SK-N-SH (cell line): ENCODE measurements at regions of chr3 and their contacts with region 1.

Region 1: DNA sequence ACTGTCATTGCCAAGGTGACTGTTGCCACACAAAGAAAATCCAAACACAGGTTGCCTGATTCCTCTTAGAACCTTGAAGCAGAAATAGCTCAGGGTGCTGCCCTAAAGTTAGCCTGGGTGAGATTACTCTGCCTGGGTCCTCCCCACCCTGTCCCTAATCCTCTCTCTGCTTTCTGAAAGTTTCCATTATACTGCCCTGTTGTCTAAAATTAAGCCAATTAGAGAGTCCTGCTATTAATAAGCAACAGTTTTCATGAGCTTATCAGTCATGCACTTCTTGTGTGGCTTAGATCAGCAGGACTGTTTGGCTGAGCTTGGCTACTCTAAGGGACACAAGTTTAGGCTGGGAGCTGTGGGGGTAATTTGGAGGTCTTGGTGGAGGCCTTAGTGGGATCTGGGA is 334.7 kb upstream of the LRRFIP2 start:
- DNase-seq: no peak
- H3K4me3 ChIP-seq: no peak overlapping the region
- H3K27ac ChIP-seq: peak overlapping the region in 1 of 2 experiments; percentile 47; a peak in 1 of 4 replicates
- H3K4me1 ChIP-seq: peaks cover 0 to 16% of the 10 kb centered on the region in 2 experiments; a peak in 2 of 4 replicates
- H3K27me3 ChIP-seq: no peaks in the 10 kb centered on the region; the same call in 1 of the 2 replicates
- CTCF ChIP-seq: no peak
- EP300 ChIP-seq: peak in 1 of 2 experiments; percentile 72; a peak in 1 of 4 replicates
- RAD21 ChIP-seq: no peak; the same call in 1 of the 2 replicates

Region 2: DNA sequence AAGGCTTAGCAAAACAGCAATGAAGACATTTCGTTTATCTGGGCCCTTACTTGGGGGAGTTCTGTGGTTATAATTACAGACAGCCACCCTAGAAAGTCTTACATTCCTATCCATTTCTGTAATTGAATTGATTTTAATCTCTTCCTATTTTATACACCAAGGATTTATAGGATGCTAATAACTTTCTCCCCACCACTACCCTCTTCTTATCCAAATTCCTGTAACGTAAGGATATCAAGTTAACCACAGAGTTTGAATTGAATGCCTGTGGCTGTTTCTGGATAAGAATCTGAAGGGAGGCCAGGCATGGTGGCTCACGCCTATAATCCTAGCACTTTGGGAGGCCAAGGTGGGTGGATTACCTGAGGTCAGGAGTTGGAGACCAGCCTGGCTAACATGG is 437.1 kb before region 1 on chr3:
- CTCF ChIA-PET with region 1: no interaction called
- POLR2A ChIA-PET with region 1: no interaction called
- DNase-seq: no peak
- H3K4me3 ChIP-seq: no peak overlapping the region
- H3K27ac ChIP-seq: peak overlapping the region in 1 of 2 experiments; percentile 77; a peak in 2 of 4 replicates
- H3K4me1 ChIP-seq: peaks cover 0 to 27% of the 10 kb centered on the region in 2 experiments; a peak in 3 of 4 replicates
- H3K27me3 ChIP-seq: no peaks in the 10 kb centered on the region
- CTCF ChIP-seq: no peak
- EP300 ChIP-seq: no peak
- RAD21 ChIP-seq: no peak

Region 3: DNA sequence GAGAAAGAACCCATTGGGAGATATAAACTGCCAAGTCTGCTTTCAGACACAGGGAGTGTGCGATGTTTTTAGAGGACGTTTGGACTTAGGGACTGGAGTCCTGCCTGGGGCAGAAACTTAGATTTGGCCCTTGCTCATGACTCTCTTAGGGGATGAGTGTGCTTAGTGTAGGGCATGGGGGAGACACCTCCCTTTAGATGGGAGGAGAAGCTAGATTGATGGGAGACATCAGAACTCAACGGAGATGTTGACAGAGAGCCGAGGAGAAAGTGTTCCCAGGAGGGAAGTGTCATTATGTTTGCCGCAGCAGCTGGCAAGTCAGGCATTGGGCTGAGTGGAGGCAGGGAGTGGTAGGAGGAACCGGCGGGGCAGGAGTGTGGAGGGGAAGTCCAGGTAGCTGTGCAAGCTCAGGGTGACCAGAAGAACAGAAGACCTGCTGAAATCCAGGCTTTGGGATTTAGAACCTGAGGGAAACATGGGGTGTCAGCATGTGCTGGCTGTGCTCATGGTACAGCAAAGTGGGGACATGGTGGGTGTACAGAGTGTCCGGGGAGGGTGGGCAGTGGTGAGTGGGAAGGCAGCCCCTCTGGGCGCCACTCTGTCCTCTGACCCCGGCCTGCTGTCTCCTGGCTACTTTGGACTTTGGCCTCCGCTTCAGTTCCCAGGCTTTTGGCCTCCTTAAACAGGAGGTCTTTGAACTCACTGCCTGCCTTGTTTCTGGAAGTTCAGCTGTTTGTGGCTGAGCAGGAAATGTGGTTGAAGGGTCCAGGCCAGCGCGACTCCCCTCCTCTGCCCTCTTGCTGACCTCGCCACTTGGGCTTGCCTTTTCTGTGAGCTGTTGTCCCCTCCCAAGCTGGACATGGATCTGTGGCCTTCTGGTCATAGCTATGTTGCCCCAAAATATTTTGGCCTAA is 10.7 kb before region 1 on chr3:
- CTCF ChIA-PET with region 1: interaction called, 10 read pairs
- POLR2A ChIA-PET with region 1: no interaction called
- DNase-seq: no peak
- H3K4me3 ChIP-seq: no peak overlapping the region
- H3K27ac ChIP-seq: no peak overlapping the region
- H3K4me1 ChIP-seq: peaks cover 0 to 21% of the 10 kb centered on the region in 2 experiments; a peak in 2 of 4 replicates
- H3K27me3 ChIP-seq: no peaks in the 10 kb centered on the region
- CTCF ChIP-seq: no peak
- EP300 ChIP-seq: no peak
- RAD21 ChIP-seq: no peak

Region 4: GRCh38 chr3:37526511-37526910 is 17.4 kb after region 1 on chr3:
- CTCF ChIA-PET with region 1: no interaction called
- POLR2A ChIA-PET with region 1: no interaction called
- DNase-seq: no peak
- H3K4me3 ChIP-seq: no peak overlapping the region
- H3K27ac ChIP-seq: peak overlapping the region in 1 of 2 experiments; percentile 36; a peak in 1 of 4 replicates
- H3K4me1 ChIP-seq: peaks cover 0 to 16% of the 10 kb centered on the region in 2 experiments; a peak in 2 of 4 replicates
- H3K27me3 ChIP-seq: no peaks in the 10 kb centered on the region; the same call in 1 of the 2 replicates
- CTCF ChIP-seq: no peak
- EP300 ChIP-seq: no peak
- RAD21 ChIP-seq: no peak